CD8-positive, alpha-beta T cell (primary cell): ENCODE measurements at regions of chr20 and their contacts with region 1.

Region 1: GRCh38 chr20:50790651-50791277 is 4.1 kb upstream of the BCAS4 start:
- DNase-seq: peak; percentile 58 to 89 (median 76)
- ATAC-seq: peak; percentile 54
- H3K4me3 ChIP-seq: peak overlapping the region in 1 of 2 experiments; percentile 10
- H3K4me3 Mint-ChIP-seq: peak overlapping the region; percentile 35
- H3K27ac ChIP-seq: peak overlapping the region; percentile 54 to 82
- H3K27ac Mint-ChIP-seq: peak overlapping the region; percentile 78
- H3K4me1 ChIP-seq: peaks cover 20% of the 10 kb centered on the region
- H3K4me1 Mint-ChIP-seq: peaks cover 17% of the 10 kb centered on the region
- H3K27me3 ChIP-seq: no peaks in the 10 kb centered on the region
- H3K27me3 Mint-ChIP-seq: no peaks in the 10 kb centered on the region
- CTCF ChIP-seq: peak; percentile 74

Region 2: GRCh38 chr20:50509935-50510705 is 280.6 kb before region 1 on chr20 and contains the start of gene PTPN1:
- CTCF ChIA-PET with region 1: interaction called, 3 read pairs
- POLR2A ChIA-PET with region 1: no interaction called
- intact Hi-C with region 1: loop called in 1 of 2 experiments (anchors 5 kb)
- DNase-seq: peak; percentile 97 to 99 (median 99)
- ATAC-seq: peak; percentile 95
- H3K4me3 ChIP-seq: peak within 1 kb of the TSS; percentile 80 to 100
- H3K4me3 Mint-ChIP-seq: peak within 1 kb of the TSS; percentile 95
- H3K27ac ChIP-seq: peak within 1 kb of the TSS; percentile 91 to 94
- H3K27ac Mint-ChIP-seq: peak within 1 kb of the TSS; percentile 99
- H3K4me1 ChIP-seq: peaks cover 45% of the 10 kb centered on the region
- H3K4me1 Mint-ChIP-seq: peaks cover 52% of the 10 kb centered on the region
- H3K27me3 ChIP-seq: no peaks in the 10 kb centered on the region
- H3K27me3 Mint-ChIP-seq: no peaks in the 10 kb centered on the region
- CTCF ChIP-seq: no peak
- total RNA-seq, gene PTPN1: 96.0 to 97.5 TPM

Region 3: GRCh38 chr20:50824193-50824632 is 33.4 kb after region 1 on chr20:
- CTCF ChIA-PET with region 1: interaction called, 57 read pairs
- POLR2A ChIA-PET with region 1: interaction called, 18 read pairs
- intact Hi-C with region 1: no loop called
- DNase-seq: no peak
- ATAC-seq: no peak
- H3K4me3 ChIP-seq: no peak overlapping the region
- H3K4me3 Mint-ChIP-seq: no peak overlapping the region
- H3K27ac ChIP-seq: no peak overlapping the region
- H3K27ac Mint-ChIP-seq: no peak overlapping the region
- H3K4me1 ChIP-seq: peaks cover 21% of the 10 kb centered on the region
- H3K4me1 Mint-ChIP-seq: peaks cover 28% of the 10 kb centered on the region
- H3K27me3 ChIP-seq: no peaks in the 10 kb centered on the region
- H3K27me3 Mint-ChIP-seq: no peaks in the 10 kb centered on the region
- CTCF ChIP-seq: no peak

Region 4: DNA sequence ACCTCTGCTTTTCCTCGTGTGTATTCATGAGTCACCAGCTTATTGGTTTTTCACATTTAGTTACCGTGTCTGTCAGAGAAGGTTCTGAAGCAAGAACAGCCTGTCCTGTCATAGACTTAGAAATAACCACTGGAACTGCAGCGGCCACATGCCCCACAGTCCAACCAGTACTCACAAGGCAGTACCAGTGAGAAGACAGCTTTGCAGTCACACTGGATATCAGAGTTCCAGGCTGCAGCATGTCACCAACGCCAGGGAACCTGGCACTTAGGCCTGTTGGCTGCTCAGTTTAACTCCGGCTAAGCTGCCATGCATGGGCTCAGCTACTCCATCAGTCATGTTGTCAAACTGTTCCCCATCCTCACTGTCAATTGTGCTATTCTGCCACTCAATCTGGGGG is 100.4 kb after region 1 on chr20:
- CTCF ChIA-PET with region 1: interaction called, 13 read pairs
- POLR2A ChIA-PET with region 1: interaction called, 4 read pairs
- intact Hi-C with region 1: no loop called
- DNase-seq: no peak
- ATAC-seq: no peak
- H3K4me3 ChIP-seq: no peak overlapping the region
- H3K4me3 Mint-ChIP-seq: no peak overlapping the region
- H3K27ac ChIP-seq: no peak overlapping the region
- H3K27ac Mint-ChIP-seq: peak overlapping the region; percentile 3
- H3K4me1 ChIP-seq: no peaks in the 10 kb centered on the region
- H3K4me1 Mint-ChIP-seq: peaks cover 2% of the 10 kb centered on the region
- H3K27me3 ChIP-seq: no peaks in the 10 kb centered on the region
- H3K27me3 Mint-ChIP-seq: no peaks in the 10 kb centered on the region
- CTCF ChIP-seq: no peak

Region 5: DNA sequence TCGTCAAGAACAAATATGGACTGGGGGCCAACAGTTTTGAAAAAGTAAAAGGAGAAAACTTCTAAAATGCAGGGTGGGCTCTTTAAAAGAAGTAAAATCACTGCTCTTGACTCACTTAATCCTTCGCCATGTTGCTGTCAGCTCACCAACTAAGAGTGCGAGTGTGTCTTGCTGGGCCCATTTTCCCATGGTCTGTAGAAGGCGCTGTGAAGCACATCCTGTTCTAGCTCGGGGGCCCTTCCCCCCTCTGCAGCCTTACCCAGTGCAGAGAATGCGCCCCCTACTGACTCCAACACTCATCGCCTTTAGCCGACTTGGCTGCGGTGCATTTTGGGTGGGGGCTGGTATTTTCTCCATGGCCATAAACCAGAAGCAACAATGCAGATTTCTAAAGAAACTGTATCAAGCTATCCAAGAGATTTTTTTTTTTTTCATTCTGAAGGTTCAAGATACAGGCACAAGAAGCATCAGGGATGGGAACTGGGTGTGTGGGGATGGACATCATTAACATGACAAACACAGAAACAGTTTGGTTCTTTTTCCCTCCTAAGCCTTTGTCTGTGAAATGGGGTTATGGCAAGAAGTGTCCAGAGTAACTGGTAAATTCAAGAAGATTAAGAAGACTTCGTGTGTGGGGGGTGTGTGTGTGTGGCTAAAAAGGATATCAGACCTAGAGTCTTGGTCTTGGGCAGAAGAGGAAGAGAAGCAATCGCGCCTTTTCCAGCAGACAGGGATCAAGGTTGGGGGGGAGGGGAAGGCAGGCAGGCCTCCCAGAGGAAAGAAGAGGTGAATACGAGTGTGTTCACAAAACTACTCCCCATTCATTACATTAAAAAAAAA is 138.8 kb after region 1 on chr20:
- CTCF ChIA-PET with region 1: interaction called, 119 read pairs
- POLR2A ChIA-PET with region 1: interaction called, 77 read pairs
- intact Hi-C with region 1: loop called (anchors 1 kb)
- DNase-seq: peak; percentile 80 to 97 (median 91)
- ATAC-seq: peak; percentile 71
- H3K4me3 ChIP-seq: peak overlapping the region; percentile 64 to 74
- H3K4me3 Mint-ChIP-seq: peak overlapping the region; percentile 88
- H3K27ac ChIP-seq: peak overlapping the region; percentile 48 to 53
- H3K27ac Mint-ChIP-seq: peak overlapping the region; percentile 87
- H3K4me1 ChIP-seq: peaks cover 52% of the 10 kb centered on the region
- H3K4me1 Mint-ChIP-seq: peaks cover 62% of the 10 kb centered on the region
- H3K27me3 ChIP-seq: no peaks in the 10 kb centered on the region
- H3K27me3 Mint-ChIP-seq: no peaks in the 10 kb centered on the region
- CTCF ChIP-seq: peak; percentile 91

Region 6: DNA sequence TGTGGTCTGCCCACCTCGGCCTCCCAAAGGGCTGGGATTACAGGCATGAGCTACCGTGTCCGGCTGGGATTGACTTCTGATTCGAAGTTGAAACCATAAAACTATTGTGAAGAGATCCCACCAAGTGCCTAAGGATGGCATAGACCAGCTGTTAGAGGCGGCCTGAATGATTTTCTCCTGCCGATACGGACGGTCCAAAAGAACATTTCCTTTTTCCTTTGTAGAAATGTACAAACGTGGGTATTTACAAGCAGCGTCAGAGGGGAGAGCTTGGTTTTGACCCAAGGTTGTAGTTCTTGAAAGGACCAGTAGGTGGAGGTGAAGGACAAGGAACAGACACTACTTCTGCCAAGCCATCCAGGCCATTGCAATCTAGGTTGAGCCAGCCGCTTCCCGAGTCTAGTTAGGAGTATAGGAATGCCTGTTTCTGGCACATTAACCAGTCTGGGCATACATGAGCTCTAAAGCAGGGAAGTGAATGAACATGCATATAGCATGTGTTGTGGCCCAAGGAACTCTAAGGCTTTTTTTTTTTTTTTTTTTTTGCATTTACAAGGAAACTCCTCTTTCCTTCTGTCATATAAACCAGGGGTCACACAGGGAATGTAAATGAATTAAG is 196.9 kb after region 1 on chr20:
- CTCF ChIA-PET with region 1: interaction called, 7 read pairs
- POLR2A ChIA-PET with region 1: interaction called, 3 read pairs
- intact Hi-C with region 1: loop called (anchors 5 to 10 kb)
- DNase-seq: peak; percentile 26 to 84 (median 51)
- ATAC-seq: peak; percentile 94
- H3K4me3 ChIP-seq: no peak overlapping the region
- H3K4me3 Mint-ChIP-seq: no peak overlapping the region
- H3K27ac ChIP-seq: no peak overlapping the region
- H3K27ac Mint-ChIP-seq: no peak overlapping the region
- H3K4me1 ChIP-seq: no peaks in the 10 kb centered on the region
- H3K4me1 Mint-ChIP-seq: peaks cover 2% of the 10 kb centered on the region
- H3K27me3 ChIP-seq: peaks cover 3 to 7% of the 10 kb centered on the region in 2 experiments
- H3K27me3 Mint-ChIP-seq: peaks cover 26% of the 10 kb centered on the region
- CTCF ChIP-seq: peak; percentile 94

Region 7: DNA sequence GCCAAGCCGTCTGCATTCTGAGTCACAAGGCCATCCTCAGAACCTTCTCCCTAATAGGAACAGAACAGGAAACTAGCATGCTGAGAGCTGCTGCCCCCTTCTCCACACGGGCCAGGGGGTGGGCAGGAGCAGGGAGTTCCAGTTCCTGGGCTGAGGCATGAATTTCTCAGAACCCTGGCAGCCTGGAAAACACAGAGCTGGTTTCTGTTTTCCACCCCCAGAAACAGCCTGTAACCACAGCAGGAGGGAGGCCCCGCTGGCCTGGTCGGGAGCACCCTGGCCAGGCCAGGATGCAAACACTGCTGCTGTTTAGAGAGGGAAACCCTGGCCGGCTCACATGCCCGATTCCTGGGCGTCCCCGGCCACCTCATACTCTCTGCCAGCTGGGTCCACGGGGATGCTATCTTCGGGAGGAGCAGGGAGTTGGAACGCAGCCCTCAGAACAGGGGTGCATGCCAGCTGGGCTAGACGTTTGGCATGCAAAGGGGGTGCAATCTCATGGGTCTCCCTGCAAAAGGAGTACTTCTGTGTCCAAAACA is 621.6 kb after region 1 on chr20:
- CTCF ChIA-PET with region 1: no interaction called
- POLR2A ChIA-PET with region 1: no interaction called
- intact Hi-C with region 1: no loop called
- DNase-seq: no peak
- ATAC-seq: no peak
- H3K4me3 ChIP-seq: no peak overlapping the region
- H3K4me3 Mint-ChIP-seq: no peak overlapping the region
- H3K27ac ChIP-seq: peak overlapping the region in 1 of 2 experiments; percentile 47
- H3K27ac Mint-ChIP-seq: peak overlapping the region; percentile 75
- H3K4me1 ChIP-seq: peaks cover 26% of the 10 kb centered on the region
- H3K4me1 Mint-ChIP-seq: peaks cover 56% of the 10 kb centered on the region
- H3K27me3 ChIP-seq: no peaks in the 10 kb centered on the region
- H3K27me3 Mint-ChIP-seq: no peaks in the 10 kb centered on the region
- CTCF ChIP-seq: no peak